Activated B cell treated with CpG ODN at 0.5 μM for 24 hours (primary cell): ENCODE measurements at regions of chr17 and their contacts with region 1.

Region 1: DNA sequence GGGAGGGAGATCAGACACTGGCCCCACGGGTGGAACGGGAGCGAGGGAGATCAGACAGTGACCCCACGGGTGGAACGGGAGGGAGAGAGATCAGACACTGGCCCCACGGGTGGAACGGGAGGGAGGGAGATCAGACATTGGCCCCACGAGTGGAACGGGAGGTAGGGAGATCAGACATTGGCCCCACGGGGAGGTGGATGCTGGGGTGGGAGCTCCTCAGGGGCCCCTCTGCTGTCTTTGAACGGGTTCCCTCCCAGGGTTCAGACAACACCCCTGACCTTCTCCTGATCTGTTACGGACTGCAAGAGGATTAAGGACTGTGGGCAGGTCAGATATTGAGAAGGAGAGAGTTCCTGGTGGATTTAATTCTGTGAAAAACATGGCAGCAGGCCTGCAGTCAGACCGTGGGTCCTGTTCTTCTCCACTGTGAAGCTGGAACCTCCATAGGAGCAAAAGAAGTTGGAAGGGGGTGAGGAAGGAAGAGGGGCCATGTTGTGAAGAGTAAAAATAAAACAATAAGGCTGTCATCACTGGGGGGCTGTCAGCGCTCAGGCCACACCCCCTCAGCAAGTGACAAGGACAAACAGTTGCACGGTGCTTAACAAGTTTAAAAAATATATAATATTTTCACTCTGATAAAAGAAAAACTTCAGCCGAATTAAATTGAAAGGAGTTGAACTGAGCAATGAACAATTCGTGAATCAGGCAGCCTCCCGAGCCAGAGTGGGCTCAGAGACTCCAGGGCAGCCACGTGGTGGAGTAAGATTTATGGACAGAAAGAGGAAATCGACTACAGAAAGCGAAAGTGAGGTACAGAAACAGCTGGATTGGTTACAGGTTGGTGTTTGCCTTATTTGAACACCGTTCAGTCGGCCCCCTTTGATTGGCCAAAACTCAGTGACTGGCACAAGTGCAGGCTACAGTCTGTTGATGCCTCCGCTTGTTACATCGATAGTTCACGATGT is 348.7 kb upstream of the TNRC6C start:
- DNase-seq: peak; percentile 26
- ATAC-seq: peak; percentile 95
- H3K4me3 Mint-ChIP-seq: peak overlapping the region; percentile 73
- H3K27ac Mint-ChIP-seq: peak overlapping the region; percentile 79
- H3K4me1 Mint-ChIP-seq: peaks cover 24% of the 10 kb centered on the region
- H3K27me3 Mint-ChIP-seq: peaks cover 2% of the 10 kb centered on the region
- CTCF ChIP-seq: no peak

Region 2: GRCh38 chr17:77645072-77646045 is 35.5 kb after region 1 on chr17:
- CTCF ChIA-PET with region 1: no interaction called
- POLR2A ChIA-PET with region 1: no interaction called
- intact Hi-C with region 1: no loop called
- DNase-seq: no peak
- ATAC-seq: no peak
- H3K4me3 Mint-ChIP-seq: no peak overlapping the region
- H3K27ac Mint-ChIP-seq: no peak overlapping the region
- H3K4me1 Mint-ChIP-seq: no peaks in the 10 kb centered on the region
- H3K27me3 Mint-ChIP-seq: peaks cover 9% of the 10 kb centered on the region
- CTCF ChIP-seq: no peak

Region 3: DNA sequence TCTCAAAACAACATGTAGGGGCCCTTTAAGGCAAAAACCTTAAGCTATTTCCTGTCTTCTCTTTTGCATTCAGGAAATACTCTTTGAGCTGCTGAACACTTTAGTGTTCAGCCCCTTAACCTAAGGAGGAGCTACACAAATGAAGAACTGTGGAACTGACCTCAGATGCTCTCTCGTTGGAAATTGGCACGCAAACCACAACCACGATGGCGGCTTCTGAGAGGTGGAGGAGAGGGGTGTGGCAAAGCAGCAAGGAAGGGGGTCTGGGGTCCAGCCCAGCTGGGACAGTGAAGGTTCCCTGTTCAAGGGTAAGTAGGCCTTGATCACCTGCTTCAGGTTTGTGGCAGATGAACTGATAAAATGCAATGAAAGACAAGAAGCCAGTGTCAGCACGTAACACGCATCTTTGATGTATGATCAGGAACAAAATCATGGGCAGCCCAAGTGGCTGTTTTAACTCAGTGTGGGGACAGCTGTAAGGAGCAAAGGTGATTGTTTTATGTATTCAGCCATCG is 57.1 kb after region 1 on chr17:
- CTCF ChIA-PET with region 1: no interaction called
- POLR2A ChIA-PET with region 1: interaction called, 6 read pairs
- intact Hi-C with region 1: loop called (anchors 2 kb)
- DNase-seq: peak; percentile 24
- ATAC-seq: peak; percentile 96
- H3K4me3 Mint-ChIP-seq: peak overlapping the region; percentile 82
- H3K27ac Mint-ChIP-seq: peak overlapping the region; percentile 82
- H3K4me1 Mint-ChIP-seq: peaks cover 23% of the 10 kb centered on the region
- H3K27me3 Mint-ChIP-seq: no peaks in the 10 kb centered on the region
- CTCF ChIP-seq: no peak